ENCODE measurements at regions of chr18 and their contacts with region 1.

Region 1: DNA sequence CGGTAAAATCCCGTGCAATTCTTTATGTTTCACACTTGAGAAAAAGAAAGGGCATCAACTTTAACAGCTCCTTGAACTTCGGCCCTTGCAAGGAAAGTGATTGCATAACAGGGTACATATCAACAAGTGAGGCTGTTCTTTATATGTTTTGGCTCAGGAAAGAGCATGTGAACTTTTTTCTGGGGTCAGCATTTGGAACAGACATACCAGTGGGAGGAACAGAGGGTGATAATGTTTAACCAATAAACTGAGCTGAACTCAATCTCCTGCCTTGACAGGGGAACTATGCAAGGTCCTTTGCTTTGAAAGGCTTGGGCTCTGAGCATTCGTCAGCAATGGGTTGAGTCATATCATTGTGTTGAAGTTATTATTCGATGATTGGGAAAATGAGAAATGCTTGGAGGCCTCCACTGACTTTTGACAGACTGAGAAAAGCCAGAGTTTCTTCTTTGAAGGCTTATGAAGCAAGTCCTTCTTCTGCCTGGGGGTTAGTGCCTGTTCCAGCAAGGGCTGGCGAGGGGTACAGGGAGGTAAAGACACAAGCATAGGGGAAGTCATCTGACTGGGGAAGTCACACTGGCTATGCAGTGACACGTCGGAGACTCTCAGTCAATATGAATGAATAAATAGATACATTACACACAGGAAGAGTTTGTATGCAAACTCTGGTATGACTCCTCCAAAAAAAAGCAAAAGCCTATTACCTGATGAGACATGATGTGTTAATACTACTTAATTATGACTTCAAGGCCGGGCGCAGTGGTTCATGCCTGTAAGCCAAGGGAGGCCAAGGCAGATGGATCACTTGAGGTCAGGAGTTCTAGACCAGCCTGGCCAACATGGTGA is 57.2 kb downstream of the CYB5A start:
- DNase-seq: peak in 3 of 6 donors; percentile 77 to 82 (median 78)
- ATAC-seq: peak; percentile 88 to 93 (median 90)
- H3K4me3 ChIP-seq: no peak overlapping the region
- H3K27ac ChIP-seq: peak overlapping the region; percentile 75 to 91 (median 84)
- H3K4me1 ChIP-seq: peaks cover 34 to 50% (median 34%) of the 10 kb centered on the region in 3 donors
- H3K27me3 ChIP-seq: no peaks in the 10 kb centered on the region
- CTCF ChIP-seq: no peak

Region 2: GRCh38 chr18:74126684-74127482 is 107.7 kb before region 1 on chr18:
- intact Hi-C with region 1: no loop called
- DNase-seq: no peak
- ATAC-seq: no peak
- H3K4me3 ChIP-seq: no peak overlapping the region
- H3K27ac ChIP-seq: no peak overlapping the region
- H3K4me1 ChIP-seq: no peaks in the 10 kb centered on the region
- H3K27me3 ChIP-seq: no peaks in the 10 kb centered on the region
- CTCF ChIP-seq: no peak

Region 3: GRCh38 chr18:74291771-74292540 is 57.4 kb after region 1 on chr18 and contains the start of gene CYB5A:
- intact Hi-C with region 1: loop called in 1 of 3 experiments (anchors 5 kb)
- DNase-seq: peak; percentile 97 to 99 (median 98)
- ATAC-seq: peak; percentile 85 to 94 (median 91)
- H3K4me3 ChIP-seq: peak within 1 kb of the TSS; percentile 57 to 93 (median 76)
- H3K27ac ChIP-seq: peak within 1 kb of the TSS; percentile 49 to 92 (median 85)
- H3K4me1 ChIP-seq: peaks cover 0 to 21% (median 14%) of the 10 kb centered on the region in 3 donors
- H3K27me3 ChIP-seq: no peaks in the 10 kb centered on the region
- CTCF ChIP-seq: no peak
- total RNA-seq, gene CYB5A: 120 to 228 (median 177) TPM

Measured in pancreas (tissue), 10 donors.